ENCODE measurements at regions of chr6 and their contacts with region 1.

Region 1: DNA sequence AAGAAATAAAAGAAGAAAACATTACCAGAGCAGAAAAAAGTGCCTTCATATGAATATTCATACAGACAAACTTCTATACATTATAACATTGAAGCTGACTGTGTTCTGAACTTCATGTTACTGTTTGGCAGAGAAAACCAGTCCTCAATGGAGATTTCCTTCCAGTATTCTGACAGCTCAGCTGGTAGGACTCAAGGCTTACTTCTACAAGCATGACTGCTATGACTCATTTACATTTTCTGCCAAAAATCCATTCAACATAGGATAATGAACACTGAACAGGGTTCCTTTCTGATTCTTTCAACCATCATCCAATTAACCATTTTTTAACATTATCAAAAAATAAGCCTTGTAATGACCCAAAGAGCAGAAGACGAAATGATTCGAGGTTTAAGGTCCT is 25.4 kb downstream of the COL9A1 start:
- DNase-seq: peak; percentile 23
- ATAC-seq: no peak
- H3K4me3 ChIP-seq: no peak overlapping the region
- H3K27ac ChIP-seq: no peak overlapping the region
- H3K4me1 ChIP-seq: no peaks in the 10 kb centered on the region; the same call in 1 of the 2 replicates
- H3K27me3 ChIP-seq: peaks cover 11% of the 10 kb centered on the region
- CTCF ChIP-seq: no peak
- POLR2A ChIP-seq: no peak
- RAD21 ChIP-seq: no peak

Region 2: GRCh38 chr6:70079241-70079640 is 198.2 kb before region 1 on chr6:
- CTCF ChIA-PET with region 1: no interaction called
- POLR2A ChIA-PET with region 1: no interaction called
- dilution Hi-C with region 1: no loop called
- in situ Hi-C with region 1: no loop called
- intact Hi-C with region 1: no loop called
- DNase-seq: no peak
- ATAC-seq: no peak
- H3K4me3 ChIP-seq: no peak overlapping the region
- H3K27ac ChIP-seq: no peak overlapping the region
- H3K4me1 ChIP-seq: no peaks in the 10 kb centered on the region
- H3K27me3 ChIP-seq: no peaks in the 10 kb centered on the region
- CTCF ChIP-seq: no peak
- POLR2A ChIP-seq: no peak
- RAD21 ChIP-seq: no peak

Region 3: GRCh38 chr6:72002415-72002814 is 1724.9 kb after region 1 on chr6:
- CTCF ChIA-PET with region 1: no interaction called
- POLR2A ChIA-PET with region 1: no interaction called
- dilution Hi-C with region 1: no loop called
- in situ Hi-C with region 1: no loop called
- intact Hi-C with region 1: loop called (anchors 10 kb)
- DNase-seq: no peak
- ATAC-seq: no peak
- H3K4me3 ChIP-seq: no peak overlapping the region
- H3K27ac ChIP-seq: no peak overlapping the region
- H3K4me1 ChIP-seq: no peaks in the 10 kb centered on the region
- H3K27me3 ChIP-seq: no peaks in the 10 kb centered on the region
- CTCF ChIP-seq: no peak
- POLR2A ChIP-seq: no peak
- RAD21 ChIP-seq: no peak

Measured in IMR-90 (cell line).